ENCODE measurements at regions of chr12 and their contacts with region 1.

Region 1: GRCh38 chr12:6807170-6807569 is 14.5 kb upstream of the GPR162 start:
- DNase-seq: no peak
- ATAC-seq: no peak
- H3K4me3 ChIP-seq: no peak overlapping the region
- H3K27ac ChIP-seq: no peak overlapping the region
- H3K4me1 ChIP-seq: no peaks in the 10 kb centered on the region
- H3K27me3 ChIP-seq: no peaks in the 10 kb centered on the region
- CTCF ChIP-seq: no peak
- POLR2A ChIP-seq: no peak
- RAD21 ChIP-seq: no peak

Region 2: DNA sequence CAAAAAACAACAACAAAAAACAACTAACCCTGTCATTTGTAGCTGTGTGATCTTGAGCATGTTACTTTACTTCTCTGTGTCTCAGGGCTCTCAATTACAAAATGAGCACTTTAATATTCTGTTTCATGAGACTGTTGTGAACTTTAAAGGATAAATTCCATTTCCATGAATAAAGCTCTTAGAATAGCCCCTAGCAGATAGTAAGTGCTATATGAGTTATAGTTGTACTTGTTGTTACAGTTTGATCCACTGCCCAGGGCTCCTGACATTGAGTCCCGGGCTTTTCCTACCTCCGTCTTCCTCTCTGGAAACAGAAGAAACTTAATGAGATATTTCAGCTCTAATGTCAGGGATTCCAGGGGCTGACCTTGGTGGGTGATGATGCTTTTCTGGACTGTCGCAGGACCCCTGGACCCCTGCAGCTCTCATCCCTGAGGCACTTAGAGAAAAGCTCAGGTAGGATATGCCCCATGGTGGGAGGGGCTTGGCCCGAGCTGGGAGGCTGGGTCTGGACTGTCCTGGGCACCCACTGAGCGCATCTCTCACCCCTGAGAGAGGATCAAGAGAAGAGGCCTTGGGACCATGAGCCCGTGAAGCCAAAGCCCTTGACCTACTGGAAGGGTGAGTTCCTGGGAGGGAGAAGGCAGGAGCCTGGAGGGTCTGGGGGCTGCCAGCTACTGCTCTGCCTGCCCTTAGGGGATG is 26.2 kb after region 1 on chr12:
- CTCF ChIA-PET with region 1: no interaction called
- POLR2A ChIA-PET with region 1: interaction called, 10 read pairs
- dilution Hi-C with region 1: no loop called
- in situ Hi-C with region 1: no loop called
- intact Hi-C with region 1: no loop called
- DNase-seq: peak; percentile 30
- ATAC-seq: no peak
- H3K4me3 ChIP-seq: no peak overlapping the region
- H3K27ac ChIP-seq: no peak overlapping the region
- H3K4me1 ChIP-seq: peaks cover 7% of the 10 kb centered on the region
- H3K27me3 ChIP-seq: no peaks in the 10 kb centered on the region
- CTCF ChIP-seq: no peak
- POLR2A ChIP-seq: no peak
- RAD21 ChIP-seq: no peak

Measured in IMR-90 (cell line).